ENCODE measurements at regions of chrX and their contacts with region 1.

Region 1: DNA sequence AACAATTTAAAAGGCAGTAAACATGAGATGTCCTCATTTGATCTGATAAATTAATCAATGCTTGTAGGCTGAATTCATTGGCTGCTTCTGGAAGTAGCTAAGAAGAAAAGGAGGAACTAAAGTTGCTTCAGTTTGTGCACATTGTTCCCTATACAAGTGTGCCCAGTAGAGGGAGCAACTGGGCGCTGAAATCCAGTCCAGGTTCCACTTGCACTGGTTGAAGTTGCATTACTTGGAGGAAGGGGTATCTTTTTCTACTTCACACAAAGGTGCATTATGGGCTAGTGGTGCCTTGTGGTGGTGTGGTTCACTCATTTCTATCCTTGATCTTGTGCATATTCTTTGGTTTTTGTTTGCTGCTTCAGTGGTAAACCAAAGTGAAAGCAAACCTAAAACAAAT is 67.9 kb upstream of the SOX3 start:
- DNase-seq: peak; percentile 31
- H3K4me3 ChIP-seq: no peak overlapping the region
- H3K27ac ChIP-seq: no peak overlapping the region
- H3K4me1 ChIP-seq: no peaks in the 10 kb centered on the region
- CTCF ChIP-seq: peak; percentile 74

Region 2: DNA sequence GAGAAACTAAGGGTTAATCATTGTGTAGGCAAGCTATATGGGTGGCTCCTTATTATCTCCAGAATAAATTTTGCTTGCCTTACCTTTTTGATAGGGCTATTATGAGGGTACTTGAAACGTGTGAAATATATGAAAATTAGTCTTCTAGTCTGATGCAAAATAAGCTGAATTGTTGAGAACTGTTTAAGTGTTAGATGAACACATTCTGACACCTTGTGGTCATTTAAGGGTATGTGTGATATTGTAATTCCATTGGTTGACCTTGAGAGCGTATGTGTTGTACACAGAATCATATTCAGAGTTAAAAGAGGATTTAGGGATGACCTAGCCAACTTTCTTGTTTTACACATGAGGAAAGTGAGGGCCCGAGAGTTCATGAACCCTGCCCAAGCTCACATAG is 92.2 kb after region 1 on chrX:
- CTCF ChIA-PET with region 1: no interaction called
- POLR2A ChIA-PET with region 1: no interaction called
- intact Hi-C with region 1: loop called (anchors 10 kb)
- DNase-seq: peak; percentile 5
- H3K4me3 ChIP-seq: no peak overlapping the region
- H3K27ac ChIP-seq: no peak overlapping the region
- H3K4me1 ChIP-seq: no peaks in the 10 kb centered on the region
- CTCF ChIP-seq: peak; percentile 61

Region 3: DNA sequence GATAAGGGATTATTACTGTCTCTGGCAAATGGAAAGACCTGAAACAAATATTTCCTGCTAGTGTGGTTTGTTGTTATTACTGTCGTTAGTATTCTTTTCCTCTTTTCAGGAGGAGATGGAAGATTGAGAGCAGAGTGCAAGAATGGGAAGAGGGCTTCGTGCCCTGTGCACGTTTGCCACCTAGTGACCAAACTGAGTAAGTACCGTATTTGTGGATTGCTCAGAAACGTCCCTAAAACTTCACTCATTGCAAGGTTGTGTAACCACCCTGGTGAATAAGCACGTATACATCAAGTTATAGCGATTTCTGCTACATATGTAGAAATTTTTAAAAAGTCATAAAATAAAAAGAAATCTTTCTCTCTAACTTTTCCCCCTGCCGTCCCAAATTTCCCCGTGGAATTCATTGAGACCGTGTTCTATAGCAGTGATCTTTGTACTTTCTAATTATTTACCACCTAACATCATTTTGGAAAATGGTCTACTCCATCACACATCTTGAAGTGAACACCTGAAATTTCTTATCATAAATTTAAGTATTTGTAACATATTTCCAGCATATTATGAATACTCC is 161.1 kb after region 1 on chrX:
- CTCF ChIA-PET with region 1: no interaction called
- POLR2A ChIA-PET with region 1: no interaction called
- intact Hi-C with region 1: loop called (anchors 2 kb)
- DNase-seq: peak; percentile 31
- H3K4me3 ChIP-seq: no peak overlapping the region
- H3K27ac ChIP-seq: no peak overlapping the region
- H3K4me1 ChIP-seq: no peaks in the 10 kb centered on the region
- CTCF ChIP-seq: peak; percentile 77